Left lung (tissue), 14 donors: ENCODE measurements at regions of chr9 and their contacts with region 1.

Region 1: DNA sequence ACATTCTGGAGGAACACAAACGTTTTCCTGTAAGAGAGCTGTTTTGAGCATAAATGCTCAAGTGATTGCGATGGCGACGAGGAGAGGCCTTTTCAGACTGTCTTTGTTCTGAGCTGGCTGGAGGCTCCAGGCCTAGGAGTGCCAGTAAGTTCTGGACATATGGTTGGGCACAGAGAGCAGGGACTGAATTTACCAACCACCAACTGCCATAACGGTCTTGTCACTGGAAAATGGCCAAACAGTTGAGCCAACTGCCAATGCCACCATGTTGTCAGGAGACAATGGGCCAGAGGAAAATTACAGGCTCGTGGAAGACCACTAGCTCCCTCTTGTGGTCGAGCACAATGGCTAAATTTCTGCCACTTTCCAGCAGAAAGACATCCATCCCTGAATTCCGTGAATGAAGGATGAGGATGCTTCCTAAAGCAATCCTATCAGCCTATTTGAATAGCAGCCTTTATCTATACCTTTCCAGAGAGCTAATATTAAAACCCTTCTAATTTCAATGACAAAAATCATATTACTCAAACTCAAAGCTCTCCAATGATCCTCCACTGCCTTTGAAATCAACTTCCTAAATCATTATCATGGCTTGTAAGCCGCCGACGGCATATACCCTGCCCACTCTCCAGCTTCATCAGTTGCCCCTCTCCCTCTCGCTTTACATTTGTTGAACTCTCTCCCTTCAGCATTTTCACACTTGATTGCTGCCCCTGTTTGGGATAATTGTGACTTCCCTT is 66.9 kb upstream of the GLIS3 start:
- DNase-seq: no peak
- ATAC-seq: peak; percentile 69
- H3K4me3 ChIP-seq: no peak overlapping the region
- H3K27ac ChIP-seq: no peak overlapping the region
- H3K4me1 ChIP-seq: no peaks in the 10 kb centered on the region
- H3K27me3 ChIP-seq: no peaks in the 10 kb centered on the region
- CTCF ChIP-seq: peak; percentile 46 to 54

Region 2: GRCh38 chr9:4077499-4078102 is 289.2 kb before region 1 on chr9:
- intact Hi-C with region 1: loop called in 1 of 2 experiments (anchors 10 kb)
- DNase-seq: peak; percentile 36 to 82 (median 66)
- ATAC-seq: peak; percentile 96
- H3K4me3 ChIP-seq: no peak overlapping the region
- H3K27ac ChIP-seq: no peak overlapping the region
- H3K4me1 ChIP-seq: peaks cover 0 to 6% of the 10 kb centered on the region in 2 donors
- H3K27me3 ChIP-seq: no peaks in the 10 kb centered on the region
- CTCF ChIP-seq: peak; percentile 52 to 68